Gastrocnemius medialis (tissue), 4 donors: ENCODE measurements at regions of chr6 and their contacts with region 1.

Region 1: DNA sequence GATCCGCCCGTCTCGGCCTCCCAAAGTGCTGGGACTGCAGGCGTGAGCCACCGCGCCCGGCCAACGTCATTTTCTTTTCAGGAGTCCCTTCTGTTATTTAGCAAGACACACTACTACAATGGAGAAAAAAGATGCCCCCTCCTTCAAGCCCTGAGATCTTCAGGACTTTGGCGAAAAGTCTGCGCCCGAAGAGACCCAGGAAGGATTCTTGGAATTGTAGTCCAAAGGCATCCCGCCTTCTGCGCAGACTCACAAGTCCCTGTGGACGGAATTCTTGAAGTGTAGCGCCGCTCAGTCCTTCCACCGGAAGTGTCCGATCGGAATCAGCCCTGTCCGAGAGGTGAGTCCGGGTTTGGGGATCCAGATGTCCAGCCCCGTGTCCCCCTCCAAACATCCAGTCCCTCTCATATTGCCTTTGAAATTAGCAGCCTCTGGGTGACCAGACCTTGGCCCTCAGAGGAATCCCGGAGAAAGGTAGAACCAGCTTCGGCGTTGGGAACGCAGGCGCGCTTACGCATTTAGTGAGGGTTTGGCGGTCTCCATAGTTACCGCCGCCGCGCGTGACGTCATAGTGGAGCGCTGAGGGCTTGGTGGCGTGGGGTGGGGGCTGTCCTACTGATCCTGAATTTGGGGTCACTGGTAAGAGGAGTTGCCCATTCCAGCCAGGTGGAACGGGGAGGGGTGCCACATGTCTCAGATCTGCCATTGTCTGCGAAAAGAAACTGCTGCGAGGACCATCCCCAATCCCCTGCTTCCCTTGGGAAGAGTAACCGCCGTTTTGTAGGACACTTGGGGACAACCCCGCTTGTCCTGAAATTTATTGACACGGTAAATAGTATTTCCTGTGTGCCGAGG is 490 bp downstream of the ZNF165 start:
- DNase-seq: peak; percentile 90 to 93
- ATAC-seq: peak; percentile 100
- H3K4me3 ChIP-seq: peak overlapping the region; percentile 72 to 92 (median 85)
- H3K27ac ChIP-seq: peak overlapping the region; percentile 84 to 90 (median 87)
- H3K4me1 ChIP-seq: peaks cover 10 to 11% of the 10 kb centered on the region in 2 donors
- H3K27me3 ChIP-seq: no peaks in the 10 kb centered on the region
- CTCF ChIP-seq: no peak
- POLR2A ChIP-seq: no peak

Region 2: GRCh38 chr6:27902335-27903314 is 178.2 kb before region 1 on chr6:
- in situ Hi-C with region 1: no loop called
- intact Hi-C with region 1: loop called (anchors 10 kb)
- DNase-seq: peak; percentile 53 to 60
- ATAC-seq: peak; percentile 94
- H3K4me3 ChIP-seq: peak overlapping the region; percentile 51 to 60 (median 56)
- H3K27ac ChIP-seq: peak overlapping the region; percentile 74 to 82 (median 79)
- H3K4me1 ChIP-seq: no peaks in the 10 kb centered on the region
- H3K27me3 ChIP-seq: no peaks in the 10 kb centered on the region
- CTCF ChIP-seq: no peak
- POLR2A ChIP-seq: no peak

Region 3: GRCh38 chr6:28104392-28105244 is 23.8 kb after region 1 on chr6:
- in situ Hi-C with region 1: no loop called
- intact Hi-C with region 1: loop called (anchors 1 kb)
- DNase-seq: peak; percentile 35 to 63
- ATAC-seq: peak; percentile 97 to 99
- H3K4me3 ChIP-seq: peak overlapping the region; percentile 62 to 94 (median 82)
- H3K27ac ChIP-seq: peak overlapping the region; percentile 68 to 82 (median 74)
- H3K4me1 ChIP-seq: peaks cover 0 to 3% of the 10 kb centered on the region in 2 donors
- H3K27me3 ChIP-seq: no peaks in the 10 kb centered on the region
- CTCF ChIP-seq: peak; percentile 38 to 76 (median 60)
- POLR2A ChIP-seq: peak in 1 of 2 donors; percentile 32

Region 4: GRCh38 chr6:28218271-28219248 is 137.7 kb after region 1 on chr6:
- in situ Hi-C with region 1: no loop called
- intact Hi-C with region 1: loop called (anchors 1 kb)
- DNase-seq: peak; percentile 58 to 76
- ATAC-seq: peak; percentile 92 to 95
- H3K4me3 ChIP-seq: peak overlapping the region; percentile 65 to 82 (median 76)
- H3K27ac ChIP-seq: peak overlapping the region; percentile 81 to 89 (median 84)
- H3K4me1 ChIP-seq: peaks cover 8 to 22% of the 10 kb centered on the region in 2 donors
- H3K27me3 ChIP-seq: peaks cover 12 to 35% (median 16%) of the 10 kb centered on the region in 3 donors
- CTCF ChIP-seq: no peak
- POLR2A ChIP-seq: peak in 1 of 2 donors; percentile 20

Region 5: GRCh38 chr6:28235912-28236452 is 155.1 kb after region 1 on chr6:
- in situ Hi-C with region 1: no loop called
- intact Hi-C with region 1: no loop called
- DNase-seq: no peak
- ATAC-seq: no peak
- H3K4me3 ChIP-seq: no peak overlapping the region
- H3K27ac ChIP-seq: no peak overlapping the region
- H3K4me1 ChIP-seq: no peaks in the 10 kb centered on the region
- H3K27me3 ChIP-seq: no peaks in the 10 kb centered on the region
- CTCF ChIP-seq: no peak
- POLR2A ChIP-seq: no peak